Right cardiac atrium (tissue), 5 donors: ENCODE measurements at regions of chr10 and their contacts with region 1.

Region 1: DNA sequence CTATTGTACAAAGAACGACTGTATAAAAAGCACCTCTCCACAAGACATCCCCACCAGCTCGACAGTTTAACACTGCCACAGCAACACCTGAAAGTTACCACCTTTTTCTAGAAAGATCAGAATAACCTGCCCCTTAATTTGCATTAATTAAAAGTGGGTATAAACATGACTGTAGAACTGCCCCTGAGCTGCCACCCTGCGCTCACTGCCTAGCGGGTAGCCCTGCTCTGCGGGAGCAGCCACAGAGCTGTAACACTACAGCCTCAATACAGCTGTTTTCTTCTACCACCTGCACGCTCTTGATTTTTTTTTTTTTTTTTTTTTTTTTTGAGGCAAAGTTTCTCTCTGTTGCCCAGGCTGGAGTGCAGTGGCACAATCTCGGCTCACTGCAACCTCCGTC is 140.9 kb downstream of the PARD3 start:
- DNase-seq: no peak
- ATAC-seq: no peak
- H3K4me3 ChIP-seq: no peak overlapping the region
- H3K27ac ChIP-seq: no peak overlapping the region
- H3K4me1 ChIP-seq: peaks cover 4% of the 10 kb centered on the region
- H3K27me3 ChIP-seq: no peaks in the 10 kb centered on the region

Region 2: GRCh38 chr10:34273340-34273739 is 400.8 kb before region 1 on chr10:
- intact Hi-C with region 1: no loop called
- DNase-seq: no peak
- ATAC-seq: no peak
- H3K4me3 ChIP-seq: no peak overlapping the region
- H3K27ac ChIP-seq: no peak overlapping the region
- H3K4me1 ChIP-seq: no peaks in the 10 kb centered on the region
- H3K27me3 ChIP-seq: no peaks in the 10 kb centered on the region

Region 3: DNA sequence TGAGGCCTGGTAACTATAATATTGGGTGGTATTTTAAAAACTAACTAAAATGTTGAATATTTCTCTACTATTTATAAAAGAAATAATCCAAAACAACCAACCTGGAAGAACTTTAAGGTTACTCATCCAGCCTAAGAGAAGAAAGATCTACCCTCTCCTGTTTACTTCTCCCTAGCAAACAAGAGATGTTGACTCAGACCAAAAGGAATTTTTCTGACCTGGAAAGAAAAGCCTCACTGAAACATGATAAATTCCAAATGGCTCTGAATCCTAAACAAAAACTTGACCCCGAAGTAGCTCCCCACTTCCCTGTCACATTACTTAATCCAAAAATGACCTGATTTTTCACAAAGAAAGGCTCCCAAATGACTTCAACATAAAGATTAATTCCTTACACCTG is 39.7 kb after region 1 on chr10:
- intact Hi-C with region 1: loop called in 1 of 4 experiments (anchors 2 kb)
- DNase-seq: no peak
- ATAC-seq: no peak
- H3K4me3 ChIP-seq: no peak overlapping the region
- H3K27ac ChIP-seq: no peak overlapping the region
- H3K4me1 ChIP-seq: peaks cover 16% of the 10 kb centered on the region
- H3K27me3 ChIP-seq: no peaks in the 10 kb centered on the region